Activated CD8-positive, alpha-beta T cell treated with anti-CD3 and anti-CD28 coated beads for 36 hours (primary cell): ENCODE measurements at regions of chr6 and their contacts with region 1.

Region 1: DNA sequence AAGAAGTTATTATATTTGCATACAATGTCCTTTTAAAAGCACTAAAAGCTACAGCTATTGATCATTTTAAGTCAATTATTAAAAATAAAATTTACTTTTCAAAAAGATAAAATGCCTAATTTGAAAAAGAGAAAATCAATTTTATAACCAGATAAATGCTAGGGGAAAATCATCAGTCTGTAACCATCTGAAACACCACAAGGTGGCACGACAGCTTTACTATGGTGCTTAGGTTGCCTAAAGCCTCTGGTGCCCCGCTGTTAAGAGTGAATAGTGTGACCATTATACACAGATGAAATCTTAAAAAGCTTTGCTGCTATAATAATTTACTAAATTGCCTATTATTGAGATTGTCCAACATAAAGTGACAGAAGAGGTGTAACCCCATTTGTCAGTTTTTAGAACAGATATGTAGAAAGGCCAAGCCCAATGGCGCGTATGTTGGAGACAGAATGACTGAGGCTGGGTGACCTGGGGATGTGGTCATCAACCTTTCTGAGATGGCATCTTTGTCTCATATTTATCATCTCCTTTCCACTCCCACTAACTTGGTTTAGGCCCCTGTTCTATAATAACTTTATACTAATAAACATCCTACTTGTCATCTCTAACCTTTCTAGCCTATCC is 100.8 kb downstream of the MOXD1 start:
- DNase-seq: peak; percentile 59
- ATAC-seq: peak; percentile 67
- H3K4me3 Mint-ChIP-seq: no peak overlapping the region
- H3K27ac Mint-ChIP-seq: no peak overlapping the region
- H3K4me1 Mint-ChIP-seq: no peaks in the 10 kb centered on the region
- H3K27me3 Mint-ChIP-seq: peaks cover 8% of the 10 kb centered on the region
- CTCF ChIP-seq: peak; percentile 61

Region 2: DNA sequence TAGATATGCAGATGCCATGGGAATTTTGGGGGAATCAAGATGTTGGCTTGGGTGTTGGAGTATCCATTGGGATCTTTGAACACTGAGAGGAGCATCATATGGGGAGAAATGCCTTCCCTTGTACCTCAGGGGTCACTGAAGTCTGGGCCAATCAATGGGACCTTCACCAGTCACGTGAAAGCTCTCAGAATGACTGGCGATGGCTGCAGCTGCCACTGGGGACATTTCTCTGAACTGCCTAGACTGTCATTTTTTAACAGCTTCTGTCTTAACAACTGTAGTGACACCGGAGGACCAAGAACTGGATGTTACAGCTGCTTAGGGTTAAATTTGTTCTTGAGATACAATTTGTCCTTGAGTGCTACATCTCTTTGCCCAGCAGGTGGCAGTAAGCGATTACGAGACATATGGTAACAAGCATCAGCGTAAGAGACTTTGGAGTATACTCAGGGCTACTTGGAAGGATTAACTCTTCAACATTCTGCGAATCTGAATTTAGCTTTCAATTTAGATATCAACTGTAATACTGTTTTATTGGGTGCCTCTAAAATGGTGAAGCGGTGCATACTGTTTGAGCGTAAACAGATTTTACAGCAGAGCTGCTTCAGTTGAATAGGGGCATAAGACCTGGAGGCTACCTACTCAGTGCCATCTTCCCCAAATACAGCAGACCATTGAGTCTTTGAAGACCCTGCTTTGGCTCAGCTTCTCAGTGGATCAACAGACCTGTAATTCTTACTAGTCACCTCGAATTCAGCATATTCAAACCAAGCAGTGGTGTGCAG is 385.3 kb before region 1 on chr6:
- CTCF ChIA-PET with region 1: interaction called, 10 read pairs
- POLR2A ChIA-PET with region 1: no interaction called
- intact Hi-C with region 1: no loop called
- DNase-seq: peak; percentile 79
- ATAC-seq: peak; percentile 73
- H3K4me3 Mint-ChIP-seq: no peak overlapping the region
- H3K27ac Mint-ChIP-seq: no peak overlapping the region
- H3K4me1 Mint-ChIP-seq: peaks cover 16% of the 10 kb centered on the region
- H3K27me3 Mint-ChIP-seq: peaks cover 52% of the 10 kb centered on the region
- CTCF ChIP-seq: peak; percentile 73

Region 3: DNA sequence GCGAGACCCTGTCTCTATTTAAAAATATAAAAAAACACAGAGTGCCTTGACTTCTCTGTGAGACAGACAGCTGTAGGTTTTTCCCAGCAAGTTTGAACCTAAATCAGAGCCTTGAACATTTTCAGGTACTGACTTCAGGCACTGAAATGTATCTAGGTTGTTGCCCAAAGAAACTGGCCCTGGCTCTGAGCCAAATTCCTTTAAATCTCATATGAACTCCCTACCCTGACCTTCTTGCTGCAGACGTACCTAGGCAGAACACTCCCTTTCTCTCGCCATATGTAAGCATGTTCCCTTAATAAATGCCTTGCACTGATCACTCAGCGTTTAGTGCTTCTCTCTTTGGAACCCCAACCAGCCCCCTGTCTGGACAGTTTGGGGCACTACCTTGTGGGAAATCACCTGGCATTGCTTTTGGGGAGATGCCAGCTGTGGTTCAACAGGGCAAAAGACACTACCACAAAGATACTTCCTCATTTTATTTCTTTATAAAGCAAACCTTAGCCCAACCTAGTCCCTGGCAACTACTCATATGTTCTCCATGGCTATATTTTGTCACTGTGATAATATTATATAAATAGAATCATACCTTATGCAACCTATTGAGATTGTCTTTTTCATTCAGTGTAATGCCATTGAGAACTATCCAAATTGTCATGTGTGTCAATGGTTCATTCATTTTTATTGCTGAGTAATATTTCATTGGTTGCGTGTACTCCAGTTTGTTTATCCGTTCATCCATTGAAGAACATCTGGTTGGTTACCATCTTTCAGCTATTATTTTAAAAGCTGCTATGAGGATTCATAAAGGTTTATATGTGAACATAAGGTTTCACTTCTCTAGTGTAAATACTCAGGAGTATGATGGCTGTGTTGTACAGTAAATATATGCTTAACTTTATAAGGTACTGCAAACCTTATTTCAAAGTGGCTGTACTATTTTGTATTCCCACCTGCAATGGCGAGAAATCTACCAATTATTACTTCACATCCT is 14.1 kb before region 1 on chr6:
- CTCF ChIA-PET with region 1: interaction called, 12 read pairs
- POLR2A ChIA-PET with region 1: no interaction called
- intact Hi-C with region 1: no loop called
- DNase-seq: no peak
- ATAC-seq: no peak
- H3K4me3 Mint-ChIP-seq: no peak overlapping the region
- H3K27ac Mint-ChIP-seq: no peak overlapping the region
- H3K4me1 Mint-ChIP-seq: no peaks in the 10 kb centered on the region
- H3K27me3 Mint-ChIP-seq: peaks cover 11% of the 10 kb centered on the region
- CTCF ChIP-seq: no peak

Region 4: GRCh38 chr6:132391391-132392271 is 91.2 kb after region 1 on chr6:
- CTCF ChIA-PET with region 1: interaction called, 11 read pairs
- POLR2A ChIA-PET with region 1: no interaction called
- intact Hi-C with region 1: no loop called
- DNase-seq: no peak
- ATAC-seq: no peak
- H3K4me3 Mint-ChIP-seq: no peak overlapping the region
- H3K27ac Mint-ChIP-seq: no peak overlapping the region
- H3K4me1 Mint-ChIP-seq: no peaks in the 10 kb centered on the region
- H3K27me3 Mint-ChIP-seq: peaks cover 14% of the 10 kb centered on the region
- CTCF ChIP-seq: no peak

Region 5: DNA sequence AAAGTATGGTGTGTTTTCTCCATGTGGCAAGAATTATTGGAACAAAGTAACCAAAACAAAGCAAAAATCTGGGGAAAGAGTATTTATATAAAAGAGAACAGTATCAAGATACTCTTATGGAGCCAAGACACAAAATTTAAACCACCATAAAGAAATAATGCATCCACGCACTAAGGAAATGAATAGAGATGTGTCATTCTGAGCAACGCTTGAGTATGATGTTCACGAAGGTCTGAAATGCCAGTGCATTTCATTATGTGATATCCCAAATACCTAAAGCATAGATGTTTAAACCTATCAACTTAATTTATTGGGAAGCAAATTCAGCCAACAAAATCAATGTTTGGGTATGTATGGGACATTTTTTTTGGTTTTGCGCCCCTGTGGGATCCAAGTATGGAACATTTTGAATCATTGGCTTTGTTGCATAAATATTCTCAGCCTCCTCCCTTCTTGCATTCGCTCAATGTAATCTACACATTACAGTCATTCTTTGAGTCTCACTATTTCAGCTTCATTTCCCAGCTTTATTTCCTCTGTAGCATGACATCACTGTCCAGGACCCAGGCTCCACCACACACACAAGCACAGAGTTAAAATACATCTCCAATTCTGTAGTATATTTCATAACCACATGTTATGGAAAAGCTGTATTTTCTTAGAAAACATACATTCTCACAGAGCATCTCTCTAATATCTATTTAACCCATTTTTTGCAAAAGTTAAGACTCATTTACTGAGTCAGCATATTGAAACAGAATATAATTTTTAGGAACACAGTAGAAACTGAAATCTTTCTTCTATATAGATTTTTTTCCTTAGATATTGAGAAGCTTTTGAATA is 112.4 kb after region 1 on chr6:
- CTCF ChIA-PET with region 1: no interaction called
- POLR2A ChIA-PET with region 1: no interaction called
- intact Hi-C with region 1: no loop called
- DNase-seq: no peak
- ATAC-seq: no peak
- H3K4me3 Mint-ChIP-seq: no peak overlapping the region
- H3K27ac Mint-ChIP-seq: no peak overlapping the region
- H3K4me1 Mint-ChIP-seq: no peaks in the 10 kb centered on the region
- H3K27me3 Mint-ChIP-seq: peaks cover 22% of the 10 kb centered on the region
- CTCF ChIP-seq: no peak

Region 6: DNA sequence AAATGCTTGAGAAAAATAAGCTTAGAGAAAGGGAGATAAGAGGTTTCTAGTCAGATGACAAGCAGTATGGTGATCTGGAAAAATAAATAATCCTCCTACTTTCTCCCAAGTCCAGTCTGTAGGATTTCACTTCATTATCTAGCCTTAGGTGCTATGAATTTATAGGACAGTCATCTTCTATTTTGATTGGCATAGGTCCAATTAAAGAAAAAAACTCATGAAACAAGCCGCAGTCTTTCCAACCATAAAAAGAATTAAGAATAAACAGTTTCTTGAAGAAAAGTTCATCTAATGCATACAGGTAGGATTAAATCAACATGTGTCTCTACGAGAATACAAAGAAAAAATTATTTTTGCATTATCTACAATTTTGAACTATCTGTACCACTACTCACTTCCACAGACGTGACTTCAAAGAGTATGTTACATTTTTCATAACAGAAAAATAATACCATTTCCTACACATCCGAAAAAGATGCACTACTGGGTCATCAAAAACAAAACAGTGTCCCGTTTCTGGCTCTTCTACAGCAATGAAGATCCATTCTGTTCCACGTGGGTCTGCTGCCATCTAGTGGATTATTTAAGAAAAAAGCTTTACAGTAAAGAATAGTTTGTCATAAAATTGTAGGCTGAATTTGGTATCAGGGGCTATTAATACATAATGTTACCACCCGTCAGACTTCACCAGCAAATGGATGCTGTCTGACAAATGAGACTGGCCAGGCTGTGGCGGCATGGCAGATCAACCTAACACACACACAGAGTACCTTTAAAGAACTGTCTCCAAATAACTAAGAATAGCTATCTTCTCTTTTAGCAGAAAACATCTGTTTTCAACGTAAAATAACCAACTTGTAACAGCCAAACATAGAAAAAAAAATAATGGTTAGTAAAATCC is 183.6 kb after region 1 on chr6:
- CTCF ChIA-PET with region 1: interaction called, 55 read pairs
- POLR2A ChIA-PET with region 1: interaction called, 4 read pairs
- intact Hi-C with region 1: loop called (anchors 5 kb)
- DNase-seq: peak; percentile 59
- ATAC-seq: peak; percentile 67
- H3K4me3 Mint-ChIP-seq: no peak overlapping the region
- H3K27ac Mint-ChIP-seq: no peak overlapping the region
- H3K4me1 Mint-ChIP-seq: peaks cover 12% of the 10 kb centered on the region
- H3K27me3 Mint-ChIP-seq: no peaks in the 10 kb centered on the region
- CTCF ChIP-seq: peak; percentile 81